Activated CD4-positive, alpha-beta memory T cell treated with anti-CD3 and anti-CD28 coated beads, Interleukin-2, amount 10 ng/mL, durations not matched to agents 7 days and 5 days (primary cell): ENCODE measurements at regions of chr6 and their contacts with region 1.

Region 1: DNA sequence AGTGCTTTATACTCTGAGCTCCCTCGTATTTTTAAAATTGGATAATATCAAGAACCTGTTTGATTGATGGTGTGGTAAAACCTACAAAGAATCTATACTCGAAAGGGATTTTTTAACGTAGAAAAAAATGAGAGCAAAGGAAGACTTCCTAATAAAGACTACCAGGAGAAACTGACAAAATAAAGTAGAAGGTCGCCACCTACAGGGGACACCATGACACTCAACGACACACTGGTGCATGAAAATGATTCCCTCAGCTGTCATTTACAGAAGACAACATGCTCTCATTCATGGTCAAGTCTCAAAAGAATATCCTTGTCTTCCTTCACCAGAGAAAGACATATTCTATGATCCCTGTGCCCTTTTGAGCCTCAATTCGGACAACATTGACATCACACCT is 10.1 kb upstream of the NHSL1 start:
- DNase-seq: peak; percentile 59
- H3K4me3 Mint-ChIP-seq: no peak overlapping the region
- H3K27ac Mint-ChIP-seq: no peak overlapping the region
- H3K4me1 Mint-ChIP-seq: peaks cover 2% of the 10 kb centered on the region
- H3K27me3 Mint-ChIP-seq: peaks cover 9% of the 10 kb centered on the region

Region 2: GRCh38 chr6:138287144-138287955 is 222.0 kb before region 1 on chr6:
- CTCF ChIA-PET with region 1: no interaction called
- POLR2A ChIA-PET with region 1: no interaction called
- DNase-seq: peak; percentile 51
- H3K4me3 Mint-ChIP-seq: no peak overlapping the region
- H3K27ac Mint-ChIP-seq: no peak overlapping the region
- H3K4me1 Mint-ChIP-seq: peaks cover 5% of the 10 kb centered on the region
- H3K27me3 Mint-ChIP-seq: no peaks in the 10 kb centered on the region

Region 3: DNA sequence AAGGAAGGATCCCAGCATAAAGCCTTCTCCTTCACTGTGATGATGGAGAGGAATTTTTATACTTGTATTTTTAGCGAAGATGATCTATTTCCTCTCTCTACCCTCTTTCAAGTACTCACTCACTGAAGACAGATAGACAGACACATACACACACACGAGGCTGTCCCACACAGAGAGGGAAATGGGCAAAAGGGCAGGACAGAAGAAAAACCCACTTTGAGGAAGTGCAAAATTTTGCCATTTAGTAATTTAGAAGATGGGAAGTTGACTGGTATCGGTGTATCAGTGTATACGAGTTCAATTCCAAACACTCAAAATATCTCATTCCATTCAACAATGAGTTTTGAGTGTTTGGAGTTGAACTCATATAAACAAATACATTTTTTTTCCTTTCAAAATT is 74.4 kb before region 1 on chr6:
- CTCF ChIA-PET with region 1: interaction called, 91 read pairs
- POLR2A ChIA-PET with region 1: no interaction called
- DNase-seq: no peak
- H3K4me3 Mint-ChIP-seq: no peak overlapping the region
- H3K27ac Mint-ChIP-seq: no peak overlapping the region
- H3K4me1 Mint-ChIP-seq: no peaks in the 10 kb centered on the region
- H3K27me3 Mint-ChIP-seq: no peaks in the 10 kb centered on the region

Region 4: GRCh38 chr6:138953451-138953850 is 444.1 kb after region 1 on chr6:
- CTCF ChIA-PET with region 1: no interaction called
- POLR2A ChIA-PET with region 1: no interaction called
- DNase-seq: no peak
- H3K4me3 Mint-ChIP-seq: no peak overlapping the region
- H3K27ac Mint-ChIP-seq: no peak overlapping the region
- H3K4me1 Mint-ChIP-seq: peaks cover 37% of the 10 kb centered on the region
- H3K27me3 Mint-ChIP-seq: no peaks in the 10 kb centered on the region